ENCODE measurements at regions of chr15 and their contacts with region 1.

Region 1: GRCh38 chr15:64905119-64905831 is 6.4 kb upstream of the ANKDD1A start:
- DNase-seq: peak; percentile 58 to 79 (median 72)
- ATAC-seq: peak; percentile 84
- H3K4me3 ChIP-seq: peak overlapping the region; percentile 38
- H3K4me3 Mint-ChIP-seq: peak overlapping the region; percentile 22 to 84 (median 74)
- H3K27ac ChIP-seq: no peak overlapping the region
- H3K27ac Mint-ChIP-seq: peak overlapping the region in 6 of 9 donors; percentile 3 to 78 (median 44)
- H3K4me1 ChIP-seq: peaks cover 17 to 21% of the 10 kb centered on the region in 2 donors
- H3K4me1 Mint-ChIP-seq: peaks cover 23 to 44% (median 41%) of the 10 kb centered on the region in 7 donors
- H3K27me3 ChIP-seq: no peaks in the 10 kb centered on the region
- H3K27me3 Mint-ChIP-seq: peaks cover 0 to 14% (median 7%) of the 10 kb centered on the region in 5 donors

Region 2: DNA sequence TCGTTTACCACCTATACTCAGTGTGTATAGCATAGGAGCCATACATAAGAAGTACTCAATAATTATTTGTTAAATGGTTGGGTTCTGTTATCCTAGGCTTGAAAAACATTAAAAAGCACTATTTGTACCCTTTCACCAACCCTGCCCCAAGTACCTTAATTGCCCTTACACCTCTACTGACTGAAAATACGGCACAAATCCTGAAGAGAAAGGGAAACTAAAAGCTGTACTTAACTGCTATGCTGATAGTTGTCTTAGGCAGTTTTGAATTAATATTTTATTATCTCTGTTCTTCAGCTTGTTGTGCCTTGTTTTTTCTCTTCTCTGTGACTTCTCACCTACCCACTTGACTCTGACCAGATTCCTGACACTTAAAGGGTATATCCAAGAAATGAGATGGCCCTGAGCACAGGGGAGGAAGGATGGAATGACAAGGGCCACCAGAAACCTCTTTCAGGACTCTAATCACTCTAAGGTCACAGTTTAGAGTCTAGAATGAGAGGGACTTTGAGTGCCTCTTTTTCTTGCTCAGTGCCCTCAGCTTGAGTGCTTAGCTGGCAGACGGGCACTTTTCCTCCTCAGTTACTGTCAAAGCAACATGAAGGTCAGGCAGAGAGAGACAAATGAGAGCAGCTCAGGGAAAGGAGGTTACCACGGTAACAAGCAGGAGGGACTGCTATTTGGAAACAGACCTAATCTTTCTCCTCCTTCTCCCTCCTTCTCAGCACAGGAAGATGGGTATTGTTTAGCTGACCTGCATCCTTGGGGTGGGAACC is 308.4 kb before region 1 on chr15:
- CTCF ChIA-PET with region 1: no interaction called
- POLR2A ChIA-PET with region 1: no interaction called
- intact Hi-C with region 1: no loop called
- DNase-seq: peak in 6 of 9 donors; percentile 51 to 68 (median 62)
- ATAC-seq: peak; percentile 81
- H3K4me3 ChIP-seq: peak overlapping the region; percentile 47
- H3K4me3 Mint-ChIP-seq: peak overlapping the region; percentile 77 to 92 (median 87)
- H3K27ac ChIP-seq: peak overlapping the region; percentile 73
- H3K27ac Mint-ChIP-seq: peak overlapping the region; percentile 89 to 99 (median 94)
- H3K4me1 ChIP-seq: peaks cover 6 to 41% of the 10 kb centered on the region in 2 donors
- H3K4me1 Mint-ChIP-seq: peaks cover 41 to 84% (median 69%) of the 10 kb centered on the region in 7 donors
- H3K27me3 ChIP-seq: no peaks in the 10 kb centered on the region
- H3K27me3 Mint-ChIP-seq: no peaks in the 10 kb centered on the region

Region 3: DNA sequence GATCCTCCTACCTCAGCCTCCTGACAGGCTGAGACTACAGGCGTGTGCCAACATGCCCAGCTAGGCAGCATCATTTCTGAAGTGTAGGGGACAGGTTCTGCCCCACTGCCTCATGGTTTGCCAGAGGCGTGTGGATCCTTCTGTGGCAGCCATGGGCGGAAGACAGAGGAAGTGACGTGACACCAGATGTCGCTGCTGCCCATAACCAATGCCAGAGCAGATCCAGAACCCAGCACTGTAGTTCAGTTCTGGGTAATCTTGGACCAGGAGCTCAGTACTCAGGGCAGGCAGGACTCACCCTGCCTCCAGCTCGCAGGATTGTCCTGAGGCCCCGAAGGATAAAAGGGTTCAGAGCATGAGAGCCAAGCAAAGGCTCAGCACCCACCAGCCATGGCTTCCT is 138.1 kb before region 1 on chr15:
- CTCF ChIA-PET with region 1: no interaction called
- POLR2A ChIA-PET with region 1: no interaction called
- intact Hi-C with region 1: loop called in 1 of 2 experiments (anchors 1 kb)
- DNase-seq: no peak
- ATAC-seq: no peak
- H3K4me3 ChIP-seq: no peak overlapping the region
- H3K4me3 Mint-ChIP-seq: no peak overlapping the region
- H3K27ac ChIP-seq: no peak overlapping the region
- H3K27ac Mint-ChIP-seq: no peak overlapping the region
- H3K4me1 ChIP-seq: no peaks in the 10 kb centered on the region
- H3K4me1 Mint-ChIP-seq: peaks cover 0 to 5% (median 0%) of the 10 kb centered on the region in 7 donors
- H3K27me3 ChIP-seq: no peaks in the 10 kb centered on the region
- H3K27me3 Mint-ChIP-seq: peaks cover under 1 to 11% (median 2%) of the 10 kb centered on the region in 5 donors

Region 4: GRCh38 chr15:64825431-64826294 is 79.6 kb before region 1 on chr15 and contains the start of gene PIF1:
- CTCF ChIA-PET with region 1: no interaction called
- POLR2A ChIA-PET with region 1: no interaction called
- intact Hi-C with region 1: loop called (anchors 1 kb)
- DNase-seq: peak; percentile 44 to 92 (median 87)
- ATAC-seq: peak; percentile 99
- H3K4me3 ChIP-seq: peak within 1 kb of the TSS; percentile 71
- H3K4me3 Mint-ChIP-seq: peak within 1 kb of the TSS; percentile 82 to 95 (median 88)
- H3K27ac ChIP-seq: peak within 1 kb of the TSS; percentile 37
- H3K27ac Mint-ChIP-seq: peak within 1 kb of the TSS in 8 of 9 donors; percentile 41 to 91 (median 75)
- H3K4me1 ChIP-seq: peaks cover 21 to 24% of the 10 kb centered on the region in 2 donors
- H3K4me1 Mint-ChIP-seq: peaks cover 25 to 42% (median 35%) of the 10 kb centered on the region in 7 donors
- H3K27me3 ChIP-seq: peaks cover 0 to 4% of the 10 kb centered on the region in 2 donors
- H3K27me3 Mint-ChIP-seq: peaks cover 0 to 19% (median 12%) of the 10 kb centered on the region in 5 donors
- total RNA-seq, gene PIF1: 0.34 to 30.2 (median 1.0) TPM in 3 of 5 experiments, not detected in the others

Region 5: GRCh38 chr15:64841258-64842095 is 63.8 kb before region 1 on chr15 and contains the start of gene PLEKHO2:
- CTCF ChIA-PET with region 1: interaction called, 7 read pairs
- POLR2A ChIA-PET with region 1: interaction called, 3 read pairs
- intact Hi-C with region 1: loop called in 1 of 2 experiments (anchors 1 kb)
- DNase-seq: peak; percentile 70 to 88 (median 80)
- ATAC-seq: peak; percentile 85
- H3K4me3 ChIP-seq: peak within 1 kb of the TSS; percentile 65
- H3K4me3 Mint-ChIP-seq: peak within 1 kb of the TSS; percentile 85 to 98 (median 96)
- H3K27ac ChIP-seq: peak within 1 kb of the TSS; percentile 81
- H3K27ac Mint-ChIP-seq: peak within 1 kb of the TSS; percentile 83 to 96 (median 91)
- H3K4me1 ChIP-seq: peaks cover 48 to 62% of the 10 kb centered on the region in 2 donors
- H3K4me1 Mint-ChIP-seq: peaks cover 63 to 89% (median 86%) of the 10 kb centered on the region in 7 donors
- H3K27me3 ChIP-seq: no peaks in the 10 kb centered on the region
- H3K27me3 Mint-ChIP-seq: no peaks in the 10 kb centered on the region
- total RNA-seq, gene PLEKHO2: 8.6 to 52.3 (median 14.0) TPM